CD4-positive, alpha-beta memory T cell (primary cell): ENCODE measurements at regions of chr17 and their contacts with region 1.

Region 1: GRCh38 chr17:40191237-40192208 is 14.3 kb downstream of the RAPGEFL1 start:
- DNase-seq: peak; percentile 52 to 67 (median 56)
- H3K4me3 ChIP-seq: peak overlapping the region; percentile 46 to 52
- H3K4me3 Mint-ChIP-seq: peak overlapping the region; percentile 90 to 96 (median 92)
- H3K27ac ChIP-seq: no peak overlapping the region
- H3K27ac Mint-ChIP-seq: peak overlapping the region in 5 of 7 donors; percentile 24 to 84 (median 82)
- H3K4me1 ChIP-seq: peaks cover 6% of the 10 kb centered on the region
- H3K4me1 Mint-ChIP-seq: peaks cover 0 to 11% (median 7%) of the 10 kb centered on the region in 4 donors
- H3K27me3 ChIP-seq: no peaks in the 10 kb centered on the region
- H3K27me3 Mint-ChIP-seq: no peaks in the 10 kb centered on the region

Region 2: GRCh38 chr17:40026816-40027613 is 164.5 kb before region 1 on chr17:
- CTCF ChIA-PET with region 1: interaction called, 26 read pairs
- POLR2A ChIA-PET with region 1: no interaction called
- intact Hi-C with region 1: no loop called
- DNase-seq: peak; percentile 67 to 78 (median 69)
- H3K4me3 ChIP-seq: no peak overlapping the region
- H3K4me3 Mint-ChIP-seq: peak overlapping the region in 3 of 8 donors; percentile 46 to 75 (median 56)
- H3K27ac ChIP-seq: no peak overlapping the region
- H3K27ac Mint-ChIP-seq: peak overlapping the region in 4 of 7 donors; percentile 15 to 52 (median 32)
- H3K4me1 ChIP-seq: peaks cover 25% of the 10 kb centered on the region
- H3K4me1 Mint-ChIP-seq: peaks cover 19 to 24% (median 21%) of the 10 kb centered on the region in 4 donors
- H3K27me3 ChIP-seq: no peaks in the 10 kb centered on the region
- H3K27me3 Mint-ChIP-seq: no peaks in the 10 kb centered on the region

Region 3: GRCh38 chr17:40139566-40140058 is 51.9 kb before region 1 on chr17:
- CTCF ChIA-PET with region 1: interaction called, 6 read pairs
- POLR2A ChIA-PET with region 1: no interaction called
- intact Hi-C with region 1: loop called (anchors 2 kb)
- DNase-seq: no peak
- H3K4me3 ChIP-seq: peak overlapping the region; percentile 25 to 62
- H3K4me3 Mint-ChIP-seq: peak overlapping the region; percentile 91 to 98 (median 96)
- H3K27ac ChIP-seq: peak overlapping the region; percentile 97
- H3K27ac Mint-ChIP-seq: peak overlapping the region; percentile 98 to 100 (median 99)
- H3K4me1 ChIP-seq: peaks cover 28% of the 10 kb centered on the region
- H3K4me1 Mint-ChIP-seq: peaks cover 23 to 49% (median 31%) of the 10 kb centered on the region in 4 donors
- H3K27me3 ChIP-seq: no peaks in the 10 kb centered on the region
- H3K27me3 Mint-ChIP-seq: no peaks in the 10 kb centered on the region

Region 4: GRCh38 chr17:40203131-40203530 is 11.6 kb after region 1 on chr17:
- CTCF ChIA-PET with region 1: interaction called, 34 read pairs
- POLR2A ChIA-PET with region 1: interaction called, 3 read pairs
- intact Hi-C with region 1: no loop called
- DNase-seq: no peak
- H3K4me3 ChIP-seq: no peak overlapping the region
- H3K4me3 Mint-ChIP-seq: no peak overlapping the region
- H3K27ac ChIP-seq: no peak overlapping the region
- H3K27ac Mint-ChIP-seq: peak overlapping the region in 1 of 7 donors; percentile 50
- H3K4me1 ChIP-seq: no peaks in the 10 kb centered on the region
- H3K4me1 Mint-ChIP-seq: peaks cover 0 to 6% (median 2%) of the 10 kb centered on the region in 4 donors
- H3K27me3 ChIP-seq: no peaks in the 10 kb centered on the region
- H3K27me3 Mint-ChIP-seq: peaks cover 1 to 7% of the 10 kb centered on the region in 2 donors

Region 5: GRCh38 chr17:40219073-40219860 is 27.7 kb after region 1 on chr17 and contains the start of gene WIPF2:
- CTCF ChIA-PET with region 1: interaction called, 12 read pairs
- POLR2A ChIA-PET with region 1: interaction called, 4 read pairs
- intact Hi-C with region 1: no loop called
- DNase-seq: peak; percentile 94 to 97 (median 95)
- H3K4me3 ChIP-seq: peak within 1 kb of the TSS; percentile 59 to 71
- H3K4me3 Mint-ChIP-seq: peak within 1 kb of the TSS; percentile 92 to 100 (median 98)
- H3K27ac ChIP-seq: peak within 1 kb of the TSS; percentile 96
- H3K27ac Mint-ChIP-seq: peak within 1 kb of the TSS; percentile 93 to 100 (median 100)
- H3K4me1 ChIP-seq: peaks cover 26% of the 10 kb centered on the region
- H3K4me1 Mint-ChIP-seq: peaks cover 23 to 49% (median 33%) of the 10 kb centered on the region in 4 donors
- H3K27me3 ChIP-seq: no peaks in the 10 kb centered on the region
- H3K27me3 Mint-ChIP-seq: no peaks in the 10 kb centered on the region
- total RNA-seq, gene WIPF2: 34.4 to 34.7 TPM